ENCODE measurements at regions of chr19 and their contacts with region 1.

Region 1: GRCh38 chr19:7799640-7800355 is 30.2 kb upstream of the EVI5L start:
- DNase-seq: peak; percentile 52
- H3K4me3 ChIP-seq: peak overlapping the region; percentile 30
- H3K27ac ChIP-seq: no peak overlapping the region
- H3K4me1 ChIP-seq: peaks cover 5% of the 10 kb centered on the region
- H3K27me3 ChIP-seq: peaks cover 69% of the 10 kb centered on the region
- CTCF ChIP-seq: peak; percentile 65

Region 2: GRCh38 chr19:7565332-7565731 is 234.5 kb before region 1 on chr19:
- intact Hi-C with region 1: loop called (anchors 5 kb)
- DNase-seq: no peak
- H3K4me3 ChIP-seq: no peak overlapping the region
- H3K27ac ChIP-seq: no peak overlapping the region
- H3K4me1 ChIP-seq: no peaks in the 10 kb centered on the region
- H3K27me3 ChIP-seq: no peaks in the 10 kb centered on the region
- CTCF ChIP-seq: no peak